ENCODE measurements at regions of chr2 and their contacts with region 1.

Region 1: DNA sequence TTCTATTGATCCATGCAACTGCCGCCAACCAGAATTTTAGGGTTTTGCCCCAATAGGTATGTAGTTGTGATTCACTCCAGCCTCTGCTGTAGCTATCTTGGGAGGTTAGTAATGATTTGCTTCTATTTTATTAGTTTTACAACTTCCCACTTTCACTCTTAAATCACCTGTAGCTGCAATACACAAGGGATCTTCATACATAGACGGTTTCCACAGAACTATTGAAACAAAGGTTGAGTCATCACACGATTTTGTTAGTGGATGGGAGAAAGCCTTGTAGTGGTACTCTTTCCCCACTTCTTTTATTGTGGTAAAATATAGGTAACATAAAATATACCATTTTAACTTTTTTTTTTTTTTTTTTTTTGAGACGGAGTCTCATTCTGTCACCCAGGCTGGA is 104.2 kb upstream of the SPRED2 start:
- DNase-seq: no peak
- H3K4me3 ChIP-seq: no peak overlapping the region
- H3K27ac ChIP-seq: no peak overlapping the region
- H3K4me1 ChIP-seq: no peaks in the 10 kb centered on the region
- H3K27me3 ChIP-seq: no peaks in the 10 kb centered on the region
- CTCF ChIP-seq: no peak
- POLR2A ChIP-seq: no peak

Region 2: GRCh38 chr2:65456064-65456463 is 80.5 kb before region 1 on chr2:
- intact Hi-C with region 1: loop called (anchors 10 kb)
- DNase-seq: no peak
- H3K4me3 ChIP-seq: no peak overlapping the region
- H3K27ac ChIP-seq: no peak overlapping the region
- H3K4me1 ChIP-seq: no peaks in the 10 kb centered on the region
- H3K27me3 ChIP-seq: no peaks in the 10 kb centered on the region
- CTCF ChIP-seq: no peak
- POLR2A ChIP-seq: no peak